ENCODE measurements at regions of chr11 and their contacts with region 1.

Region 1: DNA sequence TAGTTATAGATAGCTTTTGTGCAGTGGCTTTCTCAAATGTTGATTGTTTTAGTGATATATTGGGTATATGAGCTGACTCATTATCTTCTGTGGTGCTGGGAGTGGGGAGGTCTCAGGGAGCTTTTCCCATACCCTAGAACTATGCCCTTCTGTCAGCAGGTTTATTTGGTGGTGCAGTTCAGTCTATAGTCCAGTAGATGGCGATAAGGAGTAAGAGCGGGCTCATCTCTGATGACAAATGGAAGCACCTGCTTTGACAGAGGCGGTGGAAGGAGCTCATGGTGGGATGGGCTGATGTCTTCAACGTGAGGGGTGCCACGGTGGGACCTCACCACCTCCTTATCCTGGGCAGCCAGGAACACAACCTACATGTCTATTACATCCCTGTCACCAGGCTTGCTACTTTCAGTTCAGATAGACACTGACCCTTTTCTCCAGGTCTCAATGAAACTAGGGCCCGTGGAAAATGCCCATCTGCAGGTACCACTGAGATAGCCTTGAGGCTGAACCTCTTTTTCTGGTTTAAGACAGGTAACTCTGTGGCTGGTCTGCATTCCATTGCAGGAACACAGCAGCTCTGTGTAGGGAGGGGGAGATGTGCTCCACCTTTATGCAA is 13.0 kb upstream of the OR6A2 start:
- DNase-seq: peak; percentile 67

Region 2: GRCh38 chr11:6251120-6251733 is 561.3 kb before region 1 on chr11:
- CTCF ChIA-PET with region 1: no interaction called
- POLR2A ChIA-PET with region 1: no interaction called
- DNase-seq: peak; percentile 80

Region 3: GRCh38 chr11:6667733-6668374 is 144.6 kb before region 1 on chr11:
- CTCF ChIA-PET with region 1: no interaction called
- POLR2A ChIA-PET with region 1: no interaction called
- DNase-seq: peak; percentile 37

Region 4: GRCh38 chr11:6825231-6825744 is 12.8 kb after region 1 on chr11:
- CTCF ChIA-PET with region 1: interaction called, 29 read pairs
- POLR2A ChIA-PET with region 1: no interaction called
- DNase-seq: no peak

Region 5: GRCh38 chr11:6855971-6856541 is 43.6 kb after region 1 on chr11:
- CTCF ChIA-PET with region 1: no interaction called
- POLR2A ChIA-PET with region 1: no interaction called
- DNase-seq: no peak

Measured in HEK293T (cell line).